ENCODE measurements at regions of chr3 and their contacts with region 1.

Region 1: GRCh38 chr3:9792405-9793160 is at the starts of genes ARPC4 and TADA3:
- DNase-seq: peak; percentile 93
- H3K4me3 Mint-ChIP-seq: peak within 1 kb of the TSS; percentile 99
- H3K27ac Mint-ChIP-seq: peak within 1 kb of the TSS; percentile 99
- H3K4me1 Mint-ChIP-seq: peaks cover 65% of the 10 kb centered on the region
- H3K27me3 Mint-ChIP-seq: no peaks in the 10 kb centered on the region
- total RNA-seq, gene ARPC4: 237 to 240 TPM
- total RNA-seq, gene TADA3: 86.9 to 92.1 TPM

Region 2: DNA sequence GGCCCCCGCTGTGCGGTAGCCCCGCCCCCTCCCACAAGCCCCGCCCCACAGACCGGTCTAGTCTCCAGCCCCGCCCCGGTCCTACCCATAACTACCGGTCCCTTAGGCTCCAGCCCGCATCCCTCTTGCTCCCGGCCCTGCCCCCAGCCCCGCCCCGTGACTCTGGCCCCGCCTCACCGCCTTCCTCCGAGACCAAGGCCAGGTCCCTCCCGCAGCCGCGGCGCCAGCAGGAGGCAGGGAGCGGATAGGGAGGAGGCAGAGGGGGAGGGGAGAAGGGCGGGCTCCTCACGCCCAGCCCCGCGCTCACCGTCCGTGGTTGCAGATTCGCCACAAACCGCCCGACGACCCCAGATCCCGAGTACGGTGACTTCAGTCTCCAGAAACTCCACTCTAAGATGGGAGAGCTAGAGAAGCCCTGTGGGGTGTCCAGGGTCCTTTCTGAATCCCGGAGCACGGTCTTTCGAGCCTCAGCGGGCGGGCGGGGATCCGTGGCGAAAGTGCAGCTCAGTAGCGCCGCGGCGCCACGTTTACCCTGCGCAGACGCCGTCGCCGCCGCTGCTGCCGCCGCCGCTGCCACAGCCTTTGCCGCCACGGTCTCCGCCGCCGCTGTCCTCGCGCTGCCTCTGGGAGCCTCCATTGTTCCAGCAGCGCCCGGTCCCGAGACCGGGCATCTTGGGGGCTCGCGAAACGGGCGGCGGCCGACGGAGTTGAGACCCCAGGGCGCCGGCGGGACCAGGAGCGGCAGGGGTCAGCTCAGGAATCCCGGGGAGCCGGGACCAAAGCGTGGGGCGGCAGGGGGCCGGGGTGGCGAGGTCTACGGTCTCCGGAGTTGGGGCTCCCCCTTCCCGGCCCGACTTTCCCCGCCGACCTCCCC is 61.1 kb before region 1 on chr3 and contains the start of gene BRPF1:
- CTCF ChIA-PET with region 1: interaction called, 7 read pairs
- POLR2A ChIA-PET with region 1: interaction called, 8 read pairs
- intact Hi-C with region 1: loop called (anchors 1 kb)
- DNase-seq: peak; percentile 100
- H3K4me3 Mint-ChIP-seq: peak within 1 kb of the TSS; percentile 88
- H3K27ac Mint-ChIP-seq: peak within 1 kb of the TSS; percentile 96
- H3K4me1 Mint-ChIP-seq: peaks cover 72% of the 10 kb centered on the region
- H3K27me3 Mint-ChIP-seq: no peaks in the 10 kb centered on the region
- total RNA-seq, gene BRPF1: 25.0 to 27.3 TPM

Region 3: DNA sequence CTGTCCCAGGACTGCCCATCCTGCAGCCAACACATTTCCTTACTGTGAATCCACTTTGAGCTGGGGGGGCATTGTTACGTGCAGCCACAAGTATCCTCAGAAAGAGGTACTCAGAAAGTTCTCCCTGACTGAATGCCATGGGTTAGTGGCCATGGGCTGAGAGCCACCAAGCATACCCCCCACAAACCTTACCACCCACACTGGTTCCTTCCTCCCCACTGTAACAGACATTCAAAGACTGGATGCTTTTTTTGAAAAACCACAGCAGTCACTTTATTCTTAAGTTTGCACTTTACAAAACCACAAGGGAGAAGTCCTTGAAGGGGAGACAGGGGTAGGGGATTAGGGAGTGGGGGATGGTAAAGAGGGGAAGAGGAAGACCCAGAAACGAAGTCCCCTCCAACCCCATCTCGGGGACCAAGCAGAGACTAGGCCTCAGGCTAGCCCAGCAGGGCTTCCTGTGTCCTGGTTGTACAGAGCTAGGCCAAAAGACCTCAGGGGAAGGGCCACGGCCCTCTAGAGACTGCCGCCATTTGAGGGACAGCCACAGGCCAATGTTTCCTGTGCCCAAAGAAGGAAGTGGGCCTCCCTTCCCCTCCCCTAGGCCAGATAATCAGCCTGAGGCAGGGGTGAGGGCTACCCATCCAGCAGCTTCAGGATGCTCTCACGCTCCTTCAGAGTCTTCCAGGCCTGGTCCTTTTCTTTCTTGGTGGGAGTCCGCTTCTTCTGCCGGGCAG is 12.7 kb before region 1 on chr3:
- CTCF ChIA-PET with region 1: interaction called, 8 read pairs
- POLR2A ChIA-PET with region 1: interaction called, 16 read pairs
- intact Hi-C with region 1: loop called (anchors 1 kb)
- DNase-seq: peak; percentile 62
- H3K4me3 Mint-ChIP-seq: peak overlapping the region; percentile 39
- H3K27ac Mint-ChIP-seq: peak overlapping the region; percentile 93
- H3K4me1 Mint-ChIP-seq: peaks cover 62% of the 10 kb centered on the region
- H3K27me3 Mint-ChIP-seq: no peaks in the 10 kb centered on the region

Region 4: DNA sequence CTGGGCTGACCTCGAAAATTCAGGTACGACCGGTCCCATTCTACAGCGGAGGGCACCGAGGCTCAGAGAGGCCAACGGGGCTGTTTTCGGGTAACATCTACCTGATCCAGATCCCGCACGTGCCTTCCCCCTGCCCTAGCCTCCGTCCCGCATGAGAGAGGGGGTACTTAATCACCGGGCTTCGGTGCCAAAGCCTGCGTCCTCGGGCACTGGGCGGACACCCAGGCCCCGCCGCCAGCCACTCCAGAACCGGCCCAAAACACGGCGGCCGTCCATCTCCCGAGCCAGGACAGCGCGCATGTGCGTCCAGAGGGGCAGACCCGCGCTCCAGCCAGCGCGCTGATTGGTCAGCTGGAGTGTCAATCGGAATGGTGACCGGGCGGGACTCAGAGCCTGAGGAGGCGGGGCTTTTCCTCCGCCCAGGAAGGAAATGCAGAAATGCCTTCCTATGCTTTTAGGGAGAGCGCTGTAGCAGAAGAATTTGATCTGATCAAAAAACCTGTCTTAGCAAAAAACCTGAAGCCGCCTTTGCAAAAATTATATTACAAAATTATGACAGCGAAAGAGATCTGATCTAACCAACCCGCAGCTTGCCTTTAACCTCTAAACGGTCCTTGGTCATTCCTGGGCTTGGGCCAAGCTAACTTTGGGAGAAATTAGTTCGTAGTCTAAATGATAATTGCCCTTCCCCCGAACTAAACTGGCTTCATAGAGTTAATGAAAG is 51.3 kb after region 1 on chr3 and contains the start of gene RPUSD3:
- CTCF ChIA-PET with region 1: no interaction called
- POLR2A ChIA-PET with region 1: no interaction called
- intact Hi-C with region 1: loop called (anchors 1 kb)
- DNase-seq: peak; percentile 97
- H3K4me3 Mint-ChIP-seq: peak within 1 kb of the TSS; percentile 99
- H3K27ac Mint-ChIP-seq: peak within 1 kb of the TSS; percentile 90
- H3K4me1 Mint-ChIP-seq: peaks cover 26% of the 10 kb centered on the region
- H3K27me3 Mint-ChIP-seq: no peaks in the 10 kb centered on the region
- total RNA-seq, gene RPUSD3: 79.0 to 80.8 TPM

Region 5: DNA sequence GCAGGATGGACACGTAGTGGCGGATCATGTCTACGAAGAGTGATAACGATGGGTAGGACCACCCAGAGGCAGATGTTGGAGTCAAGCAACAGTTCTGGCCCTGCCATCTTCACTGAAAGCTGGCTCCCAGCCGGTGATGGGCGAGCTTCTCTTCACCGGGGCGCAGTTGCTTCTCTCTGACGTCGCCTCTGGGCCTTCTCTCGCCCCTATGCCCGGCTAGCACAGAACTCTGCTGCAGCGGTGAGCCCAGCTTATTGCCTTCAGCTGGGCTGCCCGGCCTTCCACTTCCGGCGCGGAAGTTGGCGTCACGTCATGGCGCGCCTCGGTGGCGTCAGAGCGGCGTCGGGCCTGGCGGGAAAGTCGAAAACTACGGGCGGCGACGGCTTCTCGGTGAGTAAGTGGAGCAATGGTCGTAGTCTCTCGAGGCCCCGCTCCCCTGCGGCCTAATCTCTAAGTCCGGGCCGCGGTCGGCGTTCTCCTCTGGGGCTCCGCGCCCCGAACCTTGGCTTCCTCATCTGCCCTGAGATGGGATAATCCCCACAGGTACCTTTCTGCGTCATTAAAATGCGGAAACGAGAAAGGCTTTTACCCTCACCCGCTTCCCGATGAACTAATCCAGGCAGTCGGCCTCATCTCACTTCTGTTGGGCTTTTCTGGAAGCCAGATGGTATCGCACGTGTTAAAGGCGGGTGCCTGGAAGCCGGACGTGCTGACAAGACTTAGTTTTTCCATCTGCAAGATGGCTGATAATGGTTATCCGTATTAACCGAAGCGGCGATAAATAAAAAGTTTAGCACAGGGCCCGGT is 233.7 kb after region 1 on chr3 and contains the start of gene FANCD2:
- CTCF ChIA-PET with region 1: no interaction called
- POLR2A ChIA-PET with region 1: no interaction called
- intact Hi-C with region 1: loop called (anchors 5 kb)
- DNase-seq: peak; percentile 96
- H3K4me3 Mint-ChIP-seq: peak within 1 kb of the TSS; percentile 97
- H3K27ac Mint-ChIP-seq: peak within 1 kb of the TSS; percentile 98
- H3K4me1 Mint-ChIP-seq: peaks cover 24% of the 10 kb centered on the region
- H3K27me3 Mint-ChIP-seq: no peaks in the 10 kb centered on the region
- total RNA-seq, gene FANCD2: 83.9 to 89.4 TPM

Region 6: GRCh38 chr3:10115326-10116137 is 322.9 kb after region 1 on chr3 and contains the start of gene BRK1:
- CTCF ChIA-PET with region 1: no interaction called
- POLR2A ChIA-PET with region 1: no interaction called
- intact Hi-C with region 1: no loop called
- DNase-seq: peak; percentile 97
- H3K4me3 Mint-ChIP-seq: peak within 1 kb of the TSS; percentile 96
- H3K27ac Mint-ChIP-seq: peak within 1 kb of the TSS; percentile 94
- H3K4me1 Mint-ChIP-seq: peaks cover 33% of the 10 kb centered on the region
- H3K27me3 Mint-ChIP-seq: peaks cover 2% of the 10 kb centered on the region
- total RNA-seq, gene BRK1: 70.3 to 76.1 TPM